Panc1 (cell line): ENCODE measurements at regions of chr10 and their contacts with region 1.

Region 1: GRCh38 chr10:113922787-113923570 is 68.5 kb downstream of the NHLRC2 start:
- DNase-seq: no peak
- ATAC-seq: peak; percentile 49; the same call in 1 of the 2 replicates
- H3K4me3 ChIP-seq: no peak overlapping the region
- H3K27ac ChIP-seq: no peak overlapping the region
- H3K4me1 ChIP-seq: no peaks in the 10 kb centered on the region
- H3K27me3 ChIP-seq: no peaks in the 10 kb centered on the region
- CTCF ChIP-seq: peak; percentile 53

Region 2: DNA sequence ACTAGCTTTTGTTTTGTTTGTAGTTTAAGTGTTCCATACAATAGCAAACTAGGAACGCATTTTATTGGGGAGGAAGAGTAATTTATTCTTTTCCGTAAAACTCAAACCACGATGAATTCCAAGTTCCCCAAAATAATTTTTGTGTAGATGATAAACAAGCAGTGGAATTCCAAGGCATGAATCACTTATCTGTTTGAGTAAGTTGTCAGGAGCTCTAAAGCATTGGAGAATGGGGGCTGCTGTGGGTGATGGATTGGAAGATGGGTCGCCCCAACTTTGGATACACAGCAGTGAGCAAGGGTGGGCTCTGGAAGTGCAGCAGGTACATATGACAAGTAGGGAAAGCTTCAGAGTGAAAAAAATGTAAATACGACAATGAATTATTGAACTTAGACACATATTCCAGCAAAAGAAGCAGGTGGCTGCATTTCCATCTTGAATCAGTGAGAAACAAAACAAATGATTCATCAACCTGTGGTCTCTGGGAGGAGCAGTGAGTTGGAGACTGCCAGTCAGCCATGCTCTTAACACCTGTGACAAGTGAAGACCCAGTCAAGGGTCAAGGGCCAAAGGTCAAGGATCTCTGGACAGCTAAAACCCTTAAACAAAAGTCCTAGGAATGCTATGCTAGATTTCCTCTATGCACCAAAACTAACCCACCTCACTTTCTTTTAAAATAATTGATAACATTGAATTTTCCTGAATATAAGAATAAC is 86.5 kb after region 1 on chr10:
- CTCF ChIA-PET with region 1: interaction called, 13 read pairs
- POLR2A ChIA-PET with region 1: no interaction called
- in situ Hi-C with region 1: no loop called
- intact Hi-C with region 1: no loop called
- DNase-seq: peak; percentile 65
- ATAC-seq: 0 out of 2 replicates have a peak, but pooled peaks have one; percentile 56
- H3K4me3 ChIP-seq: no peak overlapping the region
- H3K27ac ChIP-seq: no peak overlapping the region
- H3K4me1 ChIP-seq: no peaks in the 10 kb centered on the region
- H3K27me3 ChIP-seq: no peaks in the 10 kb centered on the region
- CTCF ChIP-seq: no peak

Region 3: GRCh38 chr10:114043532-114044246 is 120.7 kb after region 1 on chr10 and contains the start of gene ADRB1:
- CTCF ChIA-PET with region 1: no interaction called
- POLR2A ChIA-PET with region 1: no interaction called
- in situ Hi-C with region 1: no loop called
- intact Hi-C with region 1: loop called (anchors 10 kb)
- DNase-seq: no peak
- ATAC-seq: peak; percentile 90
- H3K4me3 ChIP-seq: peak within 1 kb of the TSS; percentile 71 to 89
- H3K27ac ChIP-seq: peak within 1 kb of the TSS; percentile 89
- H3K4me1 ChIP-seq: peaks cover 45% of the 10 kb centered on the region
- H3K27me3 ChIP-seq: no peaks in the 10 kb centered on the region
- CTCF ChIP-seq: no peak
- total RNA-seq, gene ADRB1: 12.9 TPM